Common myeloid progenitor, CD34-positive (primary cell): ENCODE measurements at regions of chr21 and their contacts with region 1.

Region 1: GRCh38 chr21:17805966-17806365 is 13.2 kb downstream of the C21orf91 start:
- DNase-seq: no peak
- H3K4me3 ChIP-seq: no peak overlapping the region
- H3K27ac ChIP-seq: peak overlapping the region in 1 of 2 experiments; percentile 31
- H3K4me1 ChIP-seq: peaks cover 0 to 2% (median 0%) of the 10 kb centered on the region in 4 experiments
- H3K27me3 ChIP-seq: no peaks in the 10 kb centered on the region

Region 2: DNA sequence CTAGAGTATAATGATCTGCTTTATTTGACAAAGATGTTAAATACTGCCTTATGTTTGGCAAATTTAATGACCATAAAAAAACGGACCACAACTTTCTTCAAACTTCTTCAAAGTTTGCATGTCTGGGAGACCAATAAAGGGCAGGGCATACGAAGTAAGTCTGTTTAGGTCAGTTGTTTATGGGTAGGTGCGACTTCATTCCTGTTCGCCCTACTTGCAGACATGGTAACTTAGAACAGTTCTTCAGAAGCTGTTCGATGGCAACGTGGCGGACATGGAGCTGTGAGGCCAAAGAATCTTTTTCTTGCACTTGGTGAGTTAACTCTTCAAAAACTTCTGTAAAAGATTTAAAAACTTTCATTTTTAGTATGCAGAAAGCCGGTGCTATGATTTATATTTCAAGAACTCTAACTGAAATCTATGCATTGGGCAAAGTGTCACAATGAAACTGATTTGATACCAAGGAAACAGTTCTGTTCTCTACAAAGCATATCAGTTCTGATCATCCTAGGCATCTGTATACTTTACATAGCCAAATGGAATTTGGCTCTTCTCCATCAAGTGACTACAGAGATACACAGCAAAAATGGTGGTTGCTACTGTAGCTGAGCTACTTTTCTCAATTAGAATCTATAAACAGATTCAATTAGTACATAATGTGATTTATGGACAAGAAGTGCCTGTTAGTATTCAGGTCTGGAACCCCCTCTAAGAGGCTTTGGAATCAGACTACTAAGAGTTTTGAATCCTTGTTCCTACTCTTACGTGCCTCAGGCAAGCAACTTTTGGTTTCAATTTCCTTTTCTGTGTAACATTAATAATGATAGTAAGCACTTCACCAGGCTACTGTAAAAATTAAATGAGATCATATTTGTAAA is 12.5 kb before region 1 on chr21:
- CTCF ChIA-PET with region 1: interaction called, 16 read pairs
- POLR2A ChIA-PET with region 1: no interaction called
- DNase-seq: peak in 2 of 3 donors; percentile 65 to 78
- H3K4me3 ChIP-seq: peak overlapping the region in 6 of 7 experiments; percentile 38 to 80 (median 56)
- H3K27ac ChIP-seq: peak overlapping the region; percentile 69 to 82
- H3K4me1 ChIP-seq: peaks cover 23 to 72% (median 39%) of the 10 kb centered on the region in 4 experiments
- H3K27me3 ChIP-seq: no peaks in the 10 kb centered on the region

Region 3: GRCh38 chr21:17819114-17819876 is 13.3 kb after region 1 on chr21 and contains the start of gene C21orf91:
- CTCF ChIA-PET with region 1: interaction called, 33 read pairs
- POLR2A ChIA-PET with region 1: interaction called, 4 read pairs
- DNase-seq: peak; percentile 94 to 97 (median 96)
- H3K4me3 ChIP-seq: peak within 1 kb of the TSS; percentile 88 to 98 (median 94)
- H3K27ac ChIP-seq: peak within 1 kb of the TSS; percentile 96 to 98
- H3K4me1 ChIP-seq: peaks cover 11 to 38% (median 23%) of the 10 kb centered on the region in 4 experiments
- H3K27me3 ChIP-seq: no peaks in the 10 kb centered on the region